ENCODE measurements at regions of chr6 and their contacts with region 1.

Region 1: DNA sequence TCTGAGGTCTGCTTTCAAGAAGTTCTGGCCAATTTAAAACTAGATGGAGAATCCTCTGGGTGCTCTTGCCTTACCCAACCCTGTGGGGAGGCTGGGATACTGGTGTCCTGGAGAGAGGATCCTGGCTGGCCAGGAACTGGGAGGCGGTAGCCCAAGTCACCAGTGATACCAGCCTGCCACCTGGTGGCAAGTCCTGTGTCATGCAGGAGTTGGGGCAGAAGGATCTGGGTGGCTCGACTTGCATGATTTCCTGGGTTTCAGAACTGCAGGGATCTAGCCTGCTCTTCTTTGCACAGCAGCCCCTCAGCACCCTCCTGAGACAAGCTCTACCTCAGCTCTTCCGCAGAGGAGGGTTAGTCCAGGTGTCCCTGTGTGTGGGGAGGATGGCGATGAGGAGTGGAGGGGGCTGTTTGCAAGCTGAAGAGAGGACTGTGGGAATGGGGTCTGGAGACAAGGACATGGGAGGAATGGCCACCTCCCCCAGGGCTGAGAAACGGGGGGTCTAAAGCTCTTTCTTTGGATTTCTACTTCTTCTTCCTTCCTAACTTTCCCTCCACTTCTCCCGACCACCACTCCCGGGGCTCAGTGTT is 4.2 kb downstream of the KCNK17 start:
- DNase-seq: peak; percentile 31 to 38
- ATAC-seq: peak; percentile 44 to 49
- H3K4me3 ChIP-seq: no peak overlapping the region
- H3K27ac ChIP-seq: no peak overlapping the region
- H3K4me1 ChIP-seq: peaks cover 0 to 10% of the 10 kb centered on the region in 2 donors
- H3K27me3 ChIP-seq: peaks cover 3 to 21% (median 13%) of the 10 kb centered on the region in 3 donors
- CTCF ChIP-seq: peak; percentile 33 to 84 (median 80)
- POLR2A ChIP-seq: no peak

Region 2: GRCh38 chr6:38279420-38279819 is 1030.6 kb before region 1 on chr6:
- in situ Hi-C with region 1: no loop called
- intact Hi-C with region 1: no loop called
- DNase-seq: no peak
- ATAC-seq: no peak
- H3K4me3 ChIP-seq: no peak overlapping the region
- H3K27ac ChIP-seq: no peak overlapping the region
- H3K4me1 ChIP-seq: no peaks in the 10 kb centered on the region
- H3K27me3 ChIP-seq: no peaks in the 10 kb centered on the region
- CTCF ChIP-seq: no peak
- POLR2A ChIP-seq: no peak

Region 3: GRCh38 chr6:38871741-38872568 is 438.1 kb before region 1 on chr6:
- in situ Hi-C with region 1: loop called (anchors 5 to 25 kb)
- intact Hi-C with region 1: loop called (anchors 1 kb)
- DNase-seq: no peak
- ATAC-seq: no peak
- H3K4me3 ChIP-seq: no peak overlapping the region
- H3K27ac ChIP-seq: no peak overlapping the region
- H3K4me1 ChIP-seq: no peaks in the 10 kb centered on the region
- H3K27me3 ChIP-seq: peaks cover 0 to 5% (median 0%) of the 10 kb centered on the region in 3 donors
- CTCF ChIP-seq: peak; percentile 40 to 77 (median 54)
- POLR2A ChIP-seq: no peak

Region 4: DNA sequence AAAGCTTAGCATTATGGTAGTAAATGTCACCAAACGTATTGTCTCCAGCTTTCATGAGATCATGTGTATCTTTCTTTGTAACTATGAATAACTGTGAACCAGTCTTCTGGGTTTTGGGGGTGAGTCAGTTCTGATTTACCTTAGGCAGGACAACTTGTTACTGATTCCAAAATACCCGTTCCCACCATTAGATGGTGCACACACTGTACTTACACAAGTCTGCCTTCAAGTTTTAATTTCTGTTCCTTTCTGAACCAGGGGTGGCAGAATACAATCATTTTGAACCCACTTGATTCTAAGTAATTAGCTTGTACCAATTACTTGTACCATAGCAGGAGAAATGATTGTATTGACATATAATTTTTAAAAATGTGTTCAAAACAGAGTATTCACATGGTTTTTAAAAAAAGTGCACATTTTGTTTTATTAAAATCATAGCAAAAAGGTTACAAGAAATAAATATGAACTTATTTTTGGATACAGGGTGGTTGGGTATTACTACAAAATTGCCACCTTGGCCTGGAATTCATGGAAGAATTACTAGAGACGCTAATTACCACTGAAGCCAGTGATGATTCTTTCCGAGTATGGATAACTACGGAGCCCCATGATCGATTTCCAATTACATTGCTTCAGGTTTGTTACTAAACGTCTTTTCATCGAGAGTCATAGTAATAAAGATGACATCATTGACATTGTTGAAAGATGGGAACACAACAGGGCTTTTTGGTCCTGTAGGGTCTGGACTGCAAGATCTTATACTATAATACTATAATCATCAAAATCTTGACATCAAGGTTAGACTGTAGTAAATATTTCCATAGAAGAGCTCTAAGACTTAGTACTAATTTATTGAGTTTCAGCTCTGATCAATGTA is 336.6 kb before region 1 on chr6:
- in situ Hi-C with region 1: loop called in 3 of 4 experiments (anchors 10 to 25 kb)
- intact Hi-C with region 1: loop called (anchors 2 kb)
- DNase-seq: no peak
- ATAC-seq: peak; percentile 55 to 74
- H3K4me3 ChIP-seq: no peak overlapping the region
- H3K27ac ChIP-seq: no peak overlapping the region
- H3K4me1 ChIP-seq: no peaks in the 10 kb centered on the region
- H3K27me3 ChIP-seq: peaks cover 0 to 5% (median 0%) of the 10 kb centered on the region in 3 donors
- CTCF ChIP-seq: peak in 4 of 5 experiments; percentile 14 to 37 (median 26)
- POLR2A ChIP-seq: no peak

Region 5: GRCh38 chr6:39166189-39166911 is 143.7 kb before region 1 on chr6:
- in situ Hi-C with region 1: loop called in 1 of 4 experiments (anchors 10 kb)
- intact Hi-C with region 1: loop called (anchors 1 kb)
- DNase-seq: peak; percentile 26 to 29
- ATAC-seq: peak in 1 of 2 donors; percentile 58
- H3K4me3 ChIP-seq: no peak overlapping the region
- H3K27ac ChIP-seq: no peak overlapping the region
- H3K4me1 ChIP-seq: no peaks in the 10 kb centered on the region
- H3K27me3 ChIP-seq: peaks cover 0 to 4% (median 0%) of the 10 kb centered on the region in 3 donors
- CTCF ChIP-seq: peak; percentile 56 to 81 (median 74)
- POLR2A ChIP-seq: no peak

Measured in gastrocnemius medialis (tissue), 4 donors.